ENCODE measurements at regions of chr16 and their contacts with region 1.

Region 1: DNA sequence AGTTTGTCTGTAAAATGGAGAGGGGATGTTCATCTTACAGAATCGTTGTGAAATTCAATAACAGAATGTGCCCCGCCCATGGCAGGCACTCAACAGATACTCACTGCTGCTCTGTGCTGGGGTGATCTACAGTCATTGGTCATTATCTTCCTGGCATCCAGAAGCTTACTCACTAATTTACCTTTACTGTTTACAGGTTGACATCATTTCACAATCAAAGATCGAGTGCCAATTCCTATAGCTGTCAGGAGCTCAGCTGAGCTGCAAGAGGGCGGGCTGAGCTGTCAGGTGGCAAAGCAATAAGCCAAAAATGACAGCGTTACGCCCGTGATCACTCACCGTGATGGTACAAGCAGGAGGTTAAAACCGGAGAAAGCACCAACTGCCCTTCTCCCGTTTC is 51.2 kb downstream of the LITAF start:
- DNase-seq: no peak
- H3K4me3 Mint-ChIP-seq: no peak overlapping the region
- H3K27ac Mint-ChIP-seq: no peak overlapping the region
- H3K4me1 Mint-ChIP-seq: peaks cover 8% of the 10 kb centered on the region
- H3K27me3 Mint-ChIP-seq: peaks cover 2% of the 10 kb centered on the region

Region 2: GRCh38 chr16:10954903-10955302 is 580.6 kb before region 1 on chr16:
- intact Hi-C with region 1: loop called (anchors 2 kb)
- DNase-seq: no peak
- H3K4me3 Mint-ChIP-seq: peak overlapping the region; percentile 23
- H3K27ac Mint-ChIP-seq: no peak overlapping the region
- H3K4me1 Mint-ChIP-seq: peaks cover 28% of the 10 kb centered on the region
- H3K27me3 Mint-ChIP-seq: no peaks in the 10 kb centered on the region

Region 3: DNA sequence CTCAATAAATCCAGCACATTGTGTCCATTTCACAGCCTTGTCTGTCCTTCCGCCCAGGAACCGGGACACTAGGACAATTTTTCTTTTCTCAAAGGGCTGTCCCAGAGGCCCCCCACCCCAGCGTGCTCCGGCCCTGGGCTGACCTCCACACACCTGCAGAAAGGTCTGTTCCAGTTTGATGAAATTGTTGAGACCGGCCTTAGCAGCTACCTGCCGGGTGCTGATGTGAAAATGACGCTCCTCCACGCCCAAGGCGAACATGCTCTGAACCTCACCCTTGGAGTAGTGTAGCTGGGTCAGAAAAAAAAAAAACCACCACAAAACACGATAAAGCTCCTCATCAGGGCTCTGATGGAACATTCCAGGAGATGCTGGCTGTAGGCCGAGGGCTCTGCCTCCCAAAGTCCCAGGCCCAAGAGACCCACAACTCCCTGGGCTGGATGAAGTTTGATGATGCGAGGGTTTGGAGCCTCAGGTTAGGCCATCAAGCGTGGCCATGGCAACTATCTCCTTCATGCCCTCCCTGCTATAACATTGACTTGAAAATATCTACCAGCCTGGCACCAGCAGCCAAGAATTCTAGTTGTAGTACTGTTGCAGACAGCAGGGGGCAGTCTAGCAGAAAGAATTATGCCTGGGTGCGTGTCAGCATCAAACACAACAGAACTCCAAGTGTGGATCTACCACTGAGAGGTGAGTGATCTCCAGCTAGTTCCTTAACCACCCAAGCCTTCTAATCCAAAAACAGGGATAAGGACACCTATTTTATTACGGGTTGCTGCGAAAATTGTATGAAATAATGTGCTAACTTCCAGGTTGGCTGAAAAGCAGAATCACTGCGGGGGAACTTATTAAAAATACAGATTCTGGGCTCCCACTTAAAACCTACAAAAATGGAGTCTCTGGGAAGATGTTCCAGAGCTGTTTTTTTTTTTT is 128.2 kb before region 1 on chr16:
- intact Hi-C with region 1: loop called (anchors 1 kb)
- DNase-seq: peak; percentile 48
- H3K4me3 Mint-ChIP-seq: no peak overlapping the region
- H3K27ac Mint-ChIP-seq: no peak overlapping the region
- H3K4me1 Mint-ChIP-seq: no peaks in the 10 kb centered on the region
- H3K27me3 Mint-ChIP-seq: peaks cover 6% of the 10 kb centered on the region

Region 4: DNA sequence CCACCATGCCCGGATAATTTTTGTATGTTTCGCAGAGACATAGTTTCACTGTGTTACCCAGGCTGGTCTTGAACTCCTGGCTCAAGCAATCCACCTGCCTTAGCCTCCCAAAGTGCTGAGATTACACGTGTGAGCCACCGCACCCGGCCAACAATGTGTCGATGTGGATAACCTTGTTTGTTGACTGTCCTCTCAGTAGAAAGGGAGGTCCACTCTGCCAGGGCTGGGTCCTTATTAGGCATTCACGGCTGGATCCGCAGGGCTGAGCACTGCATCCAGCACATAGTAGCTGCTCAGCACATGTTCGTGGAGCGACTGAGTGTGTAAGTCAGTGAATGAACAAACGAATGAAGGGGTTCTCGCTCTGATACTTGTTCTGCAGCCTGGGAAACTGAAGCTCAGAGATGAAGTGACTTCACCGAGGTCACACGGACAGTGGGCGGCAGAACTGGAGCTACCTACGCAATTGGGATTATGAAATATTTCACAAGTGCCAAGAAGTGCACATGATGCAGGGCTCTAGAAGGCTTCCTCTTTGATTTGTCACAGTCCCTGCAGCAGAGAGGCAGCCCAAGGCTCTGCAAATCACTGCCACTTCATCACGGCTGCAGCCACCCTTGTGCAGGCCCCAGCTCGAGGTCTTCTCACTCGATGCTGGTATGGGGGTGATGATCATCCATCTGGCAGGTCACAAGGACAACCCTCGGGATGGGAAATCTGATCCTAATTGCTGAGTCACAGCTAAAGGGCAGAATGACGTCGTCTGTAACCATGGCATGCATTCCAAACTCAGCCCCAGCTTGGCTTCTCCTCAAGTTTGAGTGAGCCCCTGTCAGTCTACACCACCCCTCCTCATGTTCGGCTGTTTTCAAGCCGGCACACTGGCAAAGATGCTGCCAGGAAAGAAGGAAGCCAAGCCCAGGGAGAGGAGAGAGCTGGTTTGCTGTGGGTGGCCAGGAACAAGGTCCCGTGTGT is 104.7 kb after region 1 on chr16:
- intact Hi-C with region 1: loop called (anchors 1 kb)
- DNase-seq: no peak
- H3K4me3 Mint-ChIP-seq: no peak overlapping the region
- H3K27ac Mint-ChIP-seq: no peak overlapping the region
- H3K4me1 Mint-ChIP-seq: peaks cover 5% of the 10 kb centered on the region
- H3K27me3 Mint-ChIP-seq: peaks cover 11% of the 10 kb centered on the region

Region 5: DNA sequence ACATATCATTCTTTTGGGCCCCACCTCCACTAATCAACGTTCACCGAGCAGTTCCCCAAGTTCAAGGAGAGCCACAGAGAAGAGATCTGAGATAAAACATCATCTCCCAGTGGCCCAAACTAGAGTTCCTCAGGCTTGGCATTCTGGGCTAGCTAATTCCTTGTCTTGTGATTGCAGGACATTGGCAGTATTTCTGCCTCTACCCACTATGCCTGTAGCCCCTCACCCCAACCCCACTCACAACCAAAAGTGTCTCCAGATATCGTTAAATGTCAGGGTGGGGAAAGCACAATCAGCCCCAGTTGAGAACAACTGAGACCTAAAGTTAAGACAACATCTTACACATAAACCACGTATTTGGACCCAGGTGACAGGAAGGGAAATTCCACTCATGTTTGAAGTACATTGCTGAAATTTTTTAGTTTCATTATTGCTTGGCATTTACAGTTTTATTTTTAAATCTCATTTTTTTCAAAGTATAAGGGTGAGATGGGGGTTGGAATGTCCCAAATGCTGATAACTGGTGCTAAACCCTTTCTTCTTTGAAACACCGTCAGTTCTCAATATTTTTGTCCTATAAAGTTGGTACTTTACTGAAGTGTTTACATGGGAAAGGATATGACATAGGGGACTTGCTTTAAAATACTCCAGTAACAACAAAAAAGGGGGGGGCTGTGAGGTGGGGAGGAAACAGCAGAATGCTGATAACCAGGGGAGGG is 248.0 kb after region 1 on chr16:
- intact Hi-C with region 1: no loop called
- DNase-seq: peak; percentile 67
- H3K4me3 Mint-ChIP-seq: peak overlapping the region; percentile 83
- H3K27ac Mint-ChIP-seq: peak overlapping the region; percentile 98
- H3K4me1 Mint-ChIP-seq: peaks cover 64% of the 10 kb centered on the region
- H3K27me3 Mint-ChIP-seq: no peaks in the 10 kb centered on the region

Region 6: DNA sequence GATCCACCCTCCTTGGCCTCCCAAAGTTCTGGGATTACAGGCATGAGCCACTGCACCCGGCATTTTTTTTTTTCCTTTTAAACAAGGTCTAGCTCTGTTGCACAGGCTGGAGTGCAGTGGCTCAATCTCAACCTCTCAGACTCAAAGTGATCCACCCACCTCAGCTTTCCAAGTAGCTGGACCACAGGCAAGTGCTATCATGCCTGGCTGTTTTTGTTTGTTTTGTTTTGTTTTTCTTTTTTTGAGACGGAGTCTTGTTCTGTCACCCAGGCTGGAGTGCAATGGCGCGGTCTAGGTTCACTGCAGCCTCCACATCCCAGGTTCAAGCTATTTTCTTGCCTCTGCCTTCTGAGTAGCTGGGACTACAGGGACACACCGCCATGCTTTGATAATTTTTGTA is 280.6 kb after region 1 on chr16:
- intact Hi-C with region 1: loop called (anchors 1 kb)
- DNase-seq: no peak
- H3K4me3 Mint-ChIP-seq: no peak overlapping the region
- H3K27ac Mint-ChIP-seq: no peak overlapping the region
- H3K4me1 Mint-ChIP-seq: peaks cover 4% of the 10 kb centered on the region
- H3K27me3 Mint-ChIP-seq: peaks cover 8% of the 10 kb centered on the region

Measured in activated T-helper 1 cell treated with anti-CD3 and anti-CD28 coated beads, Interleukin-12 subunit alpha, Interleukin-12 subunit beta, Interleukin-2, Interleukin-4 antibody, amounts not matched to agents 30 ng/mL and 10 ng/mL and 1 ng/mL, durations not matched to agents 14 hours and 24 hours and 36 hours (primary cell).